ENCODE measurements at regions of chr15 and their contacts with region 1.

Region 1: GRCh38 chr15:64144565-64145281 is 6.8 kb upstream of the SNX22 start:
- DNase-seq: peak in 1 of 4 experiments; percentile 48
- ATAC-seq: peak; percentile 24
- H3K4me3 ChIP-seq: no peak overlapping the region
- H3K27ac ChIP-seq: no peak overlapping the region
- H3K4me1 ChIP-seq: peaks cover 39 to 62% of the 10 kb centered on the region in 2 experiments
- H3K27me3 ChIP-seq: no peaks in the 10 kb centered on the region
- CTCF ChIP-seq: 0 out of 6 replicates have a peak, but pooled peaks of 1 of the 3 experiments have one; percentile 3
- EP300 ChIP-seq: no peak
- POLR2A ChIP-seq: no peak
- RAD21 ChIP-seq: no peak

Region 2: GRCh38 chr15:63701365-63701764 is 443.4 kb before region 1 on chr15:
- CTCF ChIA-PET with region 1: no interaction called
- POLR2A ChIA-PET with region 1: no interaction called
- in situ Hi-C with region 1: no loop called
- intact Hi-C with region 1: no loop called
- DNase-seq: no peak
- ATAC-seq: no peak
- H3K4me3 ChIP-seq: no peak overlapping the region
- H3K27ac ChIP-seq: no peak overlapping the region
- H3K4me1 ChIP-seq: no peaks in the 10 kb centered on the region
- H3K27me3 ChIP-seq: no peaks in the 10 kb centered on the region
- CTCF ChIP-seq: no peak
- EP300 ChIP-seq: no peak
- POLR2A ChIP-seq: no peak
- RAD21 ChIP-seq: no peak

Region 3: GRCh38 chr15:64134345-64134829 is 10.3 kb before region 1 on chr15:
- CTCF ChIA-PET with region 1: no interaction called
- POLR2A ChIA-PET with region 1: interaction called, 34 read pairs
- in situ Hi-C with region 1: no loop called
- intact Hi-C with region 1: no loop called
- DNase-seq: no peak
- ATAC-seq: no peak
- H3K4me3 ChIP-seq: no peak overlapping the region
- H3K27ac ChIP-seq: no peak overlapping the region
- H3K4me1 ChIP-seq: peaks cover 0 to 9% of the 10 kb centered on the region in 2 experiments; a peak in 3 of 5 replicates
- H3K27me3 ChIP-seq: no peaks in the 10 kb centered on the region
- CTCF ChIP-seq: no peak
- EP300 ChIP-seq: no peak
- POLR2A ChIP-seq: no peak
- RAD21 ChIP-seq: no peak

Measured in K562 (cell line).